Right cardiac atrium (tissue), 5 donors: ENCODE measurements at regions of chr12 and their contacts with region 1.

Region 1: DNA sequence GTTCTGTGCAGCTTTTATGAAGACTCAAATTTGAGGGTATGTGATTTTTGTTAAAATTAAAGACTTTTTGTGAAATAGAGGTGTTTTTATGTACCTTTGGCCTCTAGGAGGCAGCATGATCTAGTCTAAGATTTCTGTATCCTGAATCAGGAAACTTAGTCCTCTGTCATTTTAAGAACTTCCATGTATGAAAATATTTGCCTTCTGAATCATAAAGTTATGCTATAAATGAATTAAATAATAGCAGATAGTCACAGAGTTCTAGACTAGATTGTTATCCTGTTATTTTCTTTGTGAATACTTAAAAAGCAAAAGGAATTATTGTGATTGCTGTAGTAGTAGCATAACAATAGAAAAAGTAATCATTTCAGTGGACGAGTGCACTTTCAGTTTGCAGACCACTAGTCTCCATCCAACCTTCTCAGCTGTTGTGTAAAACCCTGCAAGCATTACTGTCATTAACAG is 56.3 kb downstream of the FGD4 start:
- DNase-seq: no peak
- ATAC-seq: peak; percentile 75 to 76
- H3K4me3 ChIP-seq: peak overlapping the region; percentile 27
- H3K27ac ChIP-seq: no peak overlapping the region
- H3K4me1 ChIP-seq: peaks cover 1% of the 10 kb centered on the region
- H3K27me3 ChIP-seq: no peaks in the 10 kb centered on the region

Region 2: GRCh38 chr12:32365473-32366064 is 90.1 kb before region 1 on chr12:
- intact Hi-C with region 1: loop called in 1 of 4 experiments (anchors 10 kb)
- DNase-seq: peak in 1 of 3 donors; percentile 58
- ATAC-seq: peak; percentile 60 to 76
- H3K4me3 ChIP-seq: no peak overlapping the region
- H3K27ac ChIP-seq: no peak overlapping the region
- H3K4me1 ChIP-seq: no peaks in the 10 kb centered on the region
- H3K27me3 ChIP-seq: no peaks in the 10 kb centered on the region

Region 3: GRCh38 chr12:32494656-32495055 is 39.0 kb after region 1 on chr12:
- intact Hi-C with region 1: no loop called
- DNase-seq: no peak
- ATAC-seq: no peak
- H3K4me3 ChIP-seq: no peak overlapping the region
- H3K27ac ChIP-seq: no peak overlapping the region
- H3K4me1 ChIP-seq: peaks cover 4% of the 10 kb centered on the region
- H3K27me3 ChIP-seq: no peaks in the 10 kb centered on the region

Region 4: DNA sequence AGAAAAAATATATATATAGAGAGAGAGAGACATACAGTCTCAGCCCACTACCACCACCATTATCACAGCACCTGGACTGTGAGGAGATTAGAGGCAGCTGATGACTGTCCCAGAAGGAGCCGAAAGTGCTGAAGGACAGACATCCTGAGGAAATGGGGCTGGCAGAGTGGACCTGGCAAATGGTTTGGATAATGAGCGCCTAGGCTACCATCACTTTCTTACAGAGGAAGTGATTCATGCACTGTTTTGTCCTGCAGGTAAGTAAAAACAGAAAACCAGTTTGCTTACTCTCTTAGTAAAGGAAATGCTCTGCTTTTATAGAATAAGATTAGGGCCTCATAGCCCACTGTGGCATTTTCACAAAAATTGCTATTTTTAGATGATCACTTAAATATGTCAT is 194.9 kb after region 1 on chr12:
- intact Hi-C with region 1: loop called in 2 of 4 experiments (anchors 5 kb)
- DNase-seq: no peak
- ATAC-seq: no peak
- H3K4me3 ChIP-seq: no peak overlapping the region
- H3K27ac ChIP-seq: no peak overlapping the region
- H3K4me1 ChIP-seq: no peaks in the 10 kb centered on the region
- H3K27me3 ChIP-seq: no peaks in the 10 kb centered on the region

Region 5: GRCh38 chr12:32659908-32660440 is 204.3 kb after region 1 on chr12:
- intact Hi-C with region 1: loop called in 3 of 4 experiments (anchors 2 to 10 kb)
- DNase-seq: no peak
- ATAC-seq: no peak
- H3K4me3 ChIP-seq: no peak overlapping the region
- H3K27ac ChIP-seq: peak overlapping the region; percentile 66
- H3K4me1 ChIP-seq: peaks cover 7% of the 10 kb centered on the region
- H3K27me3 ChIP-seq: no peaks in the 10 kb centered on the region

Region 6: GRCh38 chr12:32671930-32672780 is 216.5 kb after region 1 on chr12:
- intact Hi-C with region 1: loop called in 2 of 4 experiments (anchors 5 to 10 kb)
- DNase-seq: no peak
- ATAC-seq: peak; percentile 77 to 85
- H3K4me3 ChIP-seq: no peak overlapping the region
- H3K27ac ChIP-seq: no peak overlapping the region
- H3K4me1 ChIP-seq: no peaks in the 10 kb centered on the region
- H3K27me3 ChIP-seq: no peaks in the 10 kb centered on the region